Activated B cell treated with CpG ODN at 0.5 μM for 24 hours (primary cell): ENCODE measurements at regions of chr10 and their contacts with region 1.

Region 1: GRCh38 chr10:80498833-80499741 is 38.6 kb upstream of the SH2D4B start:
- DNase-seq: no peak
- ATAC-seq: peak; percentile 23
- H3K4me3 Mint-ChIP-seq: no peak overlapping the region
- H3K27ac Mint-ChIP-seq: peak overlapping the region; percentile 85
- H3K4me1 Mint-ChIP-seq: peaks cover 81% of the 10 kb centered on the region
- H3K27me3 Mint-ChIP-seq: no peaks in the 10 kb centered on the region
- CTCF ChIP-seq: no peak

Region 2: DNA sequence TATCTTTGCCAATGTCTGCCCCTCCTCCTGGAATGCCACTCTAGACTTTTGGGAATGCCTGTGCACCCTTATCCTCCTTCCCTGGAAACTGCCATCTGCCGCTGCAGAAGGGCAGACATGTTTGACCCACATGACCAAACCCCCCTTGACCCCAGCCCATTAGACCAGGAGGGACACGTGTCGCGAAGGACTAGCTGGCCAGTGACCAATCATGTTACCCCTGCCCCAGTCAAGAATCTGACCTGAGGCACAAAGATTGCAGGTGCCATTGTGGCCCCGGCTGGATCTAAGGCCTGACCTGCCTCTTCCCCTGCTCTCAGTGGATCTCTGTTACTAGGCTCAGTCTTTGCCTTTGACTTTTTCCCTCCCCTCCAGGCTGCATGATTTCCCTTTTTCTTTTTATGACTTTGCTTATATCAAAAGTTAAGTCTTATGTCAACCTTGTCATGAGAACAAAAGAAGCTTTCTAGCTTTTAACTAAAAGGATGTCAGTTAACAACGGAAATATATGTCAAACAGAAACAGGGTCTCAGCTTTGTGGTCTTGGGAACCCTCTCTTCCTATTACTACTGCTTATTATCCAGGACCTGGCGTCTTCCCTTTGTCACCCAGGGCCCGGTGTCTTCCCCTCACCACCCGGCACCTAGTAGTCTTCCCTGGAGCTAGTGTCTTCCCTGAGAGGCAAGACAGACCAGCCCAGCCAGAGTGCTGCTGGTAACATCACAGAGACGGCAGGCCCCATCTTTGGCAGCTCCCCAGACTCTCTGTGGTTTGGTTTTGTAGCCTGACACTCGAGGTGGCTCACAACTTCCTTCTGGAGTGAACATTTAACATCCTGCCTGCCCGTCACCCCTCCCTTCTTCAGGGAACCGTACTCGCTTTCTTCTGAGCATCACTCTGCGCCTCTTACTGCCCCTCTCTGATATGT is 1176.2 kb before region 1 on chr10:
- CTCF ChIA-PET with region 1: no interaction called
- POLR2A ChIA-PET with region 1: no interaction called
- intact Hi-C with region 1: no loop called
- DNase-seq: no peak
- ATAC-seq: peak; percentile 40
- H3K4me3 Mint-ChIP-seq: no peak overlapping the region
- H3K27ac Mint-ChIP-seq: peak overlapping the region; percentile 38
- H3K4me1 Mint-ChIP-seq: peaks cover 42% of the 10 kb centered on the region
- H3K27me3 Mint-ChIP-seq: no peaks in the 10 kb centered on the region
- CTCF ChIP-seq: no peak

Region 3: DNA sequence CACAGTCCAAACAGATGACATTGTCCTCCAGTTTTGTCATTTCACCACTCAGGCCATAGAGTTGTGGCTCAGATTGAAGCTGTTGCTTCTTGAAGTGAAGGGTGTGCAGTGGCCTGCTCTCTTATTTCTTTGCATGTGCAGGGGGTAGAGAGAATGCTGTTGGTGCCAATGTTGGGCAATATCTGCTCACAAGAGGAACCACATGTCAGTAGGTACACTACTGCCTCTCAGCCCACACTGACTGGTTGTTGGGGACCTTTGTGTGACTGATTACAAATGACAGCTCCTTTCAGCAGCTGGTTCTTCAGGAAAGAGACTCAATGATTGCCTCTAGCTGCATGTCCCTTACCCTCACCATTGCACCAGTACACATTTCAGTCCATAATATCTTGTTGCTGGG is 910.3 kb before region 1 on chr10:
- CTCF ChIA-PET with region 1: no interaction called
- POLR2A ChIA-PET with region 1: no interaction called
- intact Hi-C with region 1: no loop called
- DNase-seq: no peak
- ATAC-seq: no peak
- H3K4me3 Mint-ChIP-seq: no peak overlapping the region
- H3K27ac Mint-ChIP-seq: no peak overlapping the region
- H3K4me1 Mint-ChIP-seq: no peaks in the 10 kb centered on the region
- H3K27me3 Mint-ChIP-seq: peaks cover 15% of the 10 kb centered on the region
- CTCF ChIP-seq: no peak

Region 4: GRCh38 chr10:79948976-79949722 is 549.9 kb before region 1 on chr10 and contains the start of gene SFTPD:
- CTCF ChIA-PET with region 1: no interaction called
- POLR2A ChIA-PET with region 1: no interaction called
- intact Hi-C with region 1: no loop called
- DNase-seq: no peak
- ATAC-seq: no peak
- H3K4me3 Mint-ChIP-seq: no peak within 1 kb of the TSS
- H3K27ac Mint-ChIP-seq: no peak within 1 kb of the TSS
- H3K4me1 Mint-ChIP-seq: no peaks in the 10 kb centered on the region
- H3K27me3 Mint-ChIP-seq: peaks cover 8% of the 10 kb centered on the region
- CTCF ChIP-seq: no peak
- total RNA-seq, gene SFTPD: 0.29 TPM in 1 of 2 replicates, not detected in the other

Region 5: GRCh38 chr10:80260295-80261243 is 238.5 kb before region 1 on chr10:
- CTCF ChIA-PET with region 1: no interaction called
- POLR2A ChIA-PET with region 1: no interaction called
- intact Hi-C with region 1: loop called (anchors 10 kb)
- DNase-seq: no peak
- ATAC-seq: peak; percentile 54
- H3K4me3 Mint-ChIP-seq: no peak overlapping the region
- H3K27ac Mint-ChIP-seq: no peak overlapping the region
- H3K4me1 Mint-ChIP-seq: no peaks in the 10 kb centered on the region
- H3K27me3 Mint-ChIP-seq: peaks cover 2% of the 10 kb centered on the region
- CTCF ChIP-seq: no peak

Region 6: DNA sequence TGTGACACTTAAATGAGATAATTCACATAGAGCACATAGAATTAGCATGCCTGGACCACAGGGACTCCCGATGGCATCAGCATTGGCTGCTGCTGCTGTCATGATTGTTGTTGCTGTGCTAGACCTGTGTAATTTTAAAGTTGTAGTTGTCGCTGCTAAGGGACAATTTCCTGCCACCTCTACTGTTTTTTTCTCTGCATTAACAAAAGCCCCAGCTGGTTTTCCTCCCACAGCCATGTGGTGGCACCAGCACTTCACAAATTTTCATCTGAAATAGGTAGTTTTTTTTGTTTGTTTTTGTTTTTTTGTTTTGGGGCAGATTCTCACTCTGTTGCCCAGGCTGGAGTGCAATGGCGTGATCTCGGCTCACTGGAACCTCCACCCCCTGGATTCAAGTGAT is 116.1 kb before region 1 on chr10:
- CTCF ChIA-PET with region 1: interaction called, 210 read pairs
- POLR2A ChIA-PET with region 1: no interaction called
- intact Hi-C with region 1: no loop called
- DNase-seq: no peak
- ATAC-seq: peak; percentile 40
- H3K4me3 Mint-ChIP-seq: no peak overlapping the region
- H3K27ac Mint-ChIP-seq: no peak overlapping the region
- H3K4me1 Mint-ChIP-seq: peaks cover 7% of the 10 kb centered on the region
- H3K27me3 Mint-ChIP-seq: peaks cover 6% of the 10 kb centered on the region
- CTCF ChIP-seq: no peak

Region 7: GRCh38 chr10:80421707-80422536 is 77.2 kb before region 1 on chr10:
- CTCF ChIA-PET with region 1: no interaction called
- POLR2A ChIA-PET with region 1: no interaction called
- intact Hi-C with region 1: no loop called
- DNase-seq: no peak
- ATAC-seq: peak; percentile 82
- H3K4me3 Mint-ChIP-seq: peak overlapping the region; percentile 24
- H3K27ac Mint-ChIP-seq: peak overlapping the region; percentile 10
- H3K4me1 Mint-ChIP-seq: peaks cover 32% of the 10 kb centered on the region
- H3K27me3 Mint-ChIP-seq: no peaks in the 10 kb centered on the region
- CTCF ChIP-seq: no peak

Region 8: DNA sequence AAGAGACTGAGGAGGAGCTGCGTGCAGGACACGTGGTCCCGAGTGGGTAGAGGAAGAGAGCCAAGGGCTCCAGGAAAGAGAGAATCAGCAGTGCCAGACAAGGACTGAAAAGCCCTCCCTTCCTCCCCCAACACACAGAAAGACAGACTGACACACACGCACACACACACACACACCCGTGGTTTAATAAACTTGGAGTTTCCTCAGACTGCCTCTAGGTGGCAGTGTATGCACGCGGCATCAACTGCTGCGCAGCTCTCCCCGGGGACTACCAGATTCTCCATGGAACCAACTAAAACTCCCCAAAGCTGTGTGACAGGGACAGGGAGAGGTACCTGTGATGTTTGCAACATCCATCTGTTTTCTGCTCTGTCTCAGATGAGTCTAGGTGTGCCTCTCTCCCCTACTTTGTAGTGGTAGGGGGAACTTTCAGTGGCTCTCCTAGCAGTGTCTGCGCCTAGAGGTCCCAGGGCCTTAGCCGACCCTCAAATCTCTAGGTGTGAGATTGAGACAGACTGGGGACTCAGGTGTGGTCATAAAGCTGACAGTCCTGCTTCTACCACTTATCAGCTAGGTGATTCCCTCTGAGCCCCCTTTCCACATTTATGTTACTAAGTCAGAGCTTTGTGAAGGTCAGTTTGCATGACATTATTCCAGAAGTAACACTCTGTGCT is 54.3 kb before region 1 on chr10:
- CTCF ChIA-PET with region 1: interaction called, 160 read pairs
- POLR2A ChIA-PET with region 1: interaction called, 21 read pairs
- intact Hi-C with region 1: loop called (anchors 1 kb)
- DNase-seq: no peak
- ATAC-seq: peak; percentile 89
- H3K4me3 Mint-ChIP-seq: no peak overlapping the region
- H3K27ac Mint-ChIP-seq: peak overlapping the region; percentile 24
- H3K4me1 Mint-ChIP-seq: peaks cover 7% of the 10 kb centered on the region
- H3K27me3 Mint-ChIP-seq: no peaks in the 10 kb centered on the region
- CTCF ChIP-seq: no peak

Region 9: GRCh38 chr10:80453701-80454513 is 45.2 kb before region 1 on chr10 and contains the start of gene TSPAN14:
- CTCF ChIA-PET with region 1: interaction called, 24 read pairs
- POLR2A ChIA-PET with region 1: interaction called, 9 read pairs
- intact Hi-C with region 1: loop called (anchors 1 kb)
- DNase-seq: peak; percentile 73
- ATAC-seq: peak; percentile 77
- H3K4me3 Mint-ChIP-seq: peak within 1 kb of the TSS; percentile 95
- H3K27ac Mint-ChIP-seq: peak within 1 kb of the TSS; percentile 89
- H3K4me1 Mint-ChIP-seq: peaks cover 50% of the 10 kb centered on the region
- H3K27me3 Mint-ChIP-seq: no peaks in the 10 kb centered on the region
- CTCF ChIP-seq: no peak
- total RNA-seq, gene TSPAN14: 18.9 and 20.7 TPM in 2 replicates

Region 10: GRCh38 chr10:80487791-80488538 is 11.1 kb before region 1 on chr10:
- CTCF ChIA-PET with region 1: interaction called, 4 read pairs
- POLR2A ChIA-PET with region 1: interaction called, 5 read pairs
- intact Hi-C with region 1: loop called (anchors 2 kb)
- DNase-seq: no peak
- ATAC-seq: no peak
- H3K4me3 Mint-ChIP-seq: no peak overlapping the region
- H3K27ac Mint-ChIP-seq: no peak overlapping the region
- H3K4me1 Mint-ChIP-seq: peaks cover 61% of the 10 kb centered on the region
- H3K27me3 Mint-ChIP-seq: no peaks in the 10 kb centered on the region
- CTCF ChIP-seq: no peak